ENCODE measurements at regions of chr12 and their contacts with region 1.

Region 1: DNA sequence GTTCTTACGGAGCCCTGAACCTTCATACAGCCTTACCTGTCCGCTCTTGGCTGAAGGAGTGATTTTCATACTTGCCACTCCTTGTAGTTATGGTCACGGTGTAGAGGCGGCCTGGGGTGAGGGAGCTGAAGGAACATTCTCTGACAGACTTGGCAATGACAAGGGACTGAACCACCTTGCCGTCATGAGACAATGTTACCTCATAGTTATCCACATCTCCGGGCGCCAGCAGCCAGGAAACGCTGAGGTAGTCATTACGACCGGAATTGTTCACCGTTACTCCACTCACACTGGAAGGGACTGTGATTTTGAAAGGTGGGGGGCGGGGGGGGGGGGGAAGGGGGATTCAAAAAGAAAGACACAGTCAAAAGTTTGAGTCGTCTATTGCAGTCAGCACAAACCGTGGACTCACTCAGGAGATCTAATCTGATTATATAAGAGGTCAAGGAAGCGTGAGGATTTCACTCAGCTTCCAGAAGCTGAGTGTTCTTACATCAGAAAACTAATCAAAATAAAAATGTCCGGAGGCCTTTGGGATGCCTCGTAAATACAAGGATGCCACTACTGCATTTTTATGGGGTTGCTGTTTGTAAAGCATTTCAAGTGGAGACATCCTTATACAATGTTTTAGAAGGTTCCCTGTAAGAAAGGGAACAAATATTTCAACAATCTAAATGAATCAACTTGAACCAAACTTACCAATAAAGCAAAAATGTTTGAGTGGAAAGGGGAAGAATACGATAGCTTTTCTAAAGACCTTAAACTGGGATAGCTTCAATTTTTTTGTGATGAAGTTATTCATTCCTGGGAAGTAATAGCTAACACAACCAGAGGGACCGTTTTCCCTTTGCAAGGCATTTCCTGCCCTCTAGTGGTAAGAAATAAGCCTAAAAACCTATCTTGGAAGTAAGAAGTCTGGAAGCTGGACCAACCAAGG is 60.6 kb downstream of the PTPRB start:
- DNase-seq: no peak
- ATAC-seq: peak; percentile 60 to 80
- H3K4me3 ChIP-seq: no peak overlapping the region
- H3K27ac ChIP-seq: no peak overlapping the region
- H3K4me1 ChIP-seq: peaks cover 4% of the 10 kb centered on the region
- H3K27me3 ChIP-seq: no peaks in the 10 kb centered on the region
- CTCF ChIP-seq: peak; percentile 79

Region 2: GRCh38 chr12:69880571-69880970 is 696.0 kb before region 1 on chr12:
- intact Hi-C with region 1: loop called (anchors 10 kb)
- DNase-seq: no peak
- ATAC-seq: no peak
- H3K4me3 ChIP-seq: no peak overlapping the region
- H3K27ac ChIP-seq: no peak overlapping the region
- H3K4me1 ChIP-seq: peaks cover 8% of the 10 kb centered on the region
- H3K27me3 ChIP-seq: no peaks in the 10 kb centered on the region
- CTCF ChIP-seq: no peak

Region 3: DNA sequence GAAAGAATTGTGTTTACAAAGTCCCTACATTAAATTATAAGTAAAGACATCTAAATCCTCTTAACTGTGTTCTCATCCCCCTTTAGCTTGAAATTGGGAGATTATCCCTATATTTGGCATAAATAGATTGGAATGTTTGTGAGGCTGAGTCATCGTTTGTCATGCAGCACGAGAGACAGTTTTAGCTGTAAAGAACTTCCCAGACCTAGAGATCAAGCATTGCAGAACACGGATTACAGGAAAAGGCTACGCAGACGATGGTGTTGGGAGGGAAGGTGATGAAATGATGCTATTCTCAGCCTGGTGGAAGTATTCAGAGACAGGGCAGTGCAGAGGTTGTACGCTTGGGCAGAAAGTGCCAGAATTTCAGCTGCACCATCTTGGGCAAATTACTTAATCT is 33.2 kb before region 1 on chr12:
- intact Hi-C with region 1: no loop called
- DNase-seq: no peak
- ATAC-seq: no peak
- H3K4me3 ChIP-seq: no peak overlapping the region
- H3K27ac ChIP-seq: no peak overlapping the region
- H3K4me1 ChIP-seq: no peaks in the 10 kb centered on the region
- H3K27me3 ChIP-seq: no peaks in the 10 kb centered on the region
- CTCF ChIP-seq: no peak

Measured in lower lobe of right lung (tissue), 2 donors.